ENCODE measurements at regions of chr6 and their contacts with region 1.

Region 1: GRCh38 chr6:150395398-150396009 is 26.7 kb downstream of the IYD start:
- DNase-seq: peak; percentile 55
- ATAC-seq: peak; percentile 77
- H3K4me3 Mint-ChIP-seq: no peak overlapping the region
- H3K27ac Mint-ChIP-seq: no peak overlapping the region
- H3K4me1 Mint-ChIP-seq: no peaks in the 10 kb centered on the region
- H3K27me3 Mint-ChIP-seq: peaks cover 5% of the 10 kb centered on the region

Region 2: GRCh38 chr6:150079604-150080003 is 315.9 kb before region 1 on chr6:
- CTCF ChIA-PET with region 1: interaction called, 56 read pairs
- POLR2A ChIA-PET with region 1: no interaction called
- intact Hi-C with region 1: loop called (anchors 1 kb)
- DNase-seq: peak; percentile 18
- ATAC-seq: peak; percentile 70
- H3K4me3 Mint-ChIP-seq: no peak overlapping the region
- H3K27ac Mint-ChIP-seq: no peak overlapping the region
- H3K4me1 Mint-ChIP-seq: peaks cover 22% of the 10 kb centered on the region
- H3K27me3 Mint-ChIP-seq: peaks cover 22% of the 10 kb centered on the region

Region 3: DNA sequence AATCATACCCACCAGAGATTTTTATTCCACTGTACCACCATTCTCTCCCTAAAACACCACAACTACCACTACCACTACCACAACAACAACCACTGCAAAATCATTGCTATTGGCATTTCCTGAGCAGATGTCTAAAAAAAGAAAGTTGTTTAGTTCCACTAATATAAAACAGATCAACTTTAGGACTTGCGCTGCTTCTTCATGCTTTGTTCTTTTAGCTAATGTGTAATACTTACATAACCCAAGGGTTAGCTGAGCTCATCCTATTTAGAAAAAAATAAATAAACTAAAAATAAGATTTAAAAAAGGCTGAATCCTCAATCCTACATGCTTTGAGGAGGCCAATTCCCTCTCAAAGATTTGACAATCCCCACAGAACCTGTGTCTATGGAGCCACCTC is 15.2 kb before region 1 on chr6:
- CTCF ChIA-PET with region 1: interaction called, 34 read pairs
- POLR2A ChIA-PET with region 1: interaction called, 5 read pairs
- intact Hi-C with region 1: no loop called
- DNase-seq: no peak
- ATAC-seq: no peak
- H3K4me3 Mint-ChIP-seq: no peak overlapping the region
- H3K27ac Mint-ChIP-seq: no peak overlapping the region
- H3K4me1 Mint-ChIP-seq: no peaks in the 10 kb centered on the region
- H3K27me3 Mint-ChIP-seq: peaks cover 21% of the 10 kb centered on the region

Region 4: GRCh38 chr6:150406948-150407347 is 11.4 kb after region 1 on chr6:
- CTCF ChIA-PET with region 1: interaction called, 11 read pairs
- POLR2A ChIA-PET with region 1: no interaction called
- intact Hi-C with region 1: no loop called
- DNase-seq: no peak
- ATAC-seq: no peak
- H3K4me3 Mint-ChIP-seq: no peak overlapping the region
- H3K27ac Mint-ChIP-seq: no peak overlapping the region
- H3K4me1 Mint-ChIP-seq: no peaks in the 10 kb centered on the region
- H3K27me3 Mint-ChIP-seq: peaks cover 29% of the 10 kb centered on the region